H1 (cell line): ENCODE measurements at regions of chr12 and their contacts with region 1.

Region 1: DNA sequence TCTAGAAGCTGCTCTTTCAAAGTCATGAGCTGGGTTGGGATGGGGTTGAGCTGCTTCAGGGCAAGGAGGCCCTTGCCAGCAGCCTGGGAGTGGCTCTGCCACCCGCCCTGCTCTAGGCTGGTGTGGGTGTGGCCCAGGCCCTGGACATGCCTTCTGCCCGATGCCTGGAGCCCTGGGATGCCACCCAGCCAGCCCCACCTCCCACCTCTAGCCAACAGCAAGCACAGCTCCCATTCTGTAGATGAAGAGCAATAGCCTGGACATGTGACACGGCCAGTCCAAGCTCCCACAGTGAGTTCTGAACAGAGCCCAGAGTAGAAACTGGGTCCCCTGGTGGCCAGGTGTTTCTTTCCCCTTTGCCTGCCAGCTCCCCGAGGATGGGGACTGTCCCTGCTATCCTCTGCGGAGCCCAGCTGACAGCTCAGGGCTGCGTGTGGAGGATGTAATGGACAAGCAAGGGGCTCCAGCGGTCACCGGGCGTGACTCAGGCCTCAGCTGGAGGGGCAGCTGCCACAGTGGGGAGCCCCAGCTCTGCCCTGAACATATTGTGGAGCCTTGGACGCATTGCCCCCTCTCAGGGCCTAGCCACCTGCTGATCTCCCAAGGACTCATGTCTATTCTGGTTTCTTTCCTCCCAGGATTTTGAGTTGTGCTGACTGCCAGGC is 165.2 kb downstream of the TSPAN9 start:
- DNase-seq: no peak
- H3K4me3 ChIP-seq: no peak overlapping the region
- H3K27ac ChIP-seq: no peak overlapping the region
- H3K4me1 ChIP-seq: peaks cover 0 to under 1% (median 0%) of the 10 kb centered on the region in 4 experiments; a peak in 4 of 7 replicates
- H3K27me3 ChIP-seq: no peaks in the 10 kb centered on the region
- CTCF ChIP-seq: peak in 1 of 3 experiments; percentile 9; a peak in 1 of 4 replicates
- EP300 ChIP-seq: no peak
- POLR2A ChIP-seq: no peak
- RAD21 ChIP-seq: no peak; a peak in 1 of 4 replicates

Region 2: DNA sequence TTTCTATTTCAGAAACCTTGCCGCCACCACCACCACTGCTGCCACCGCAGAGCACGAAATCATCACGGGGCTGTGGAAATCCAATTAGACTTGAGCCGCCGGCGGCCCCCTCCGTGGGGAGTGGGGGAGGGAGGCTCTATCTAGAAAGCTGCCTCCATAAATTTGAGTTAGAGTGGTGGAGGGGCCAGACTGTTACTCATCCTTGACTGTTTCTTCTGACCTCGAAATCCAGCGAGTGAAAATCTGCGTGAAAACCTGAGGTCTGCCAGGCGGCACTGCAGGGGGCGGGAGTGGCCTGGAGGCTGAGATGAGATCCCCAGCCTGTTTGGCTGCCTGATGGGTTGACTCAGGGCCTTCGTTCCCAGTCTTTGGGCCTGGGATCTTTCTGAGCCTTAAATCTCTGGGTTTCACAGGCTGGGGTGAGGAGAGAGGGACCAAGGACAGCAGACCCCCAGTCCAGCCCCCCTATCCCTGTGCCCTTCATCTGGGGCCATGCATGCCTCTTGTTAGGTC is 135.2 kb before region 1 on chr12:
- CTCF ChIA-PET with region 1: no interaction called
- POLR2A ChIA-PET with region 1: no interaction called
- DNase-seq: peak in 1 of 2 experiments; percentile 63
- H3K4me3 ChIP-seq: no peak overlapping the region; a peak in 1 of 8 replicates
- H3K27ac ChIP-seq: no peak overlapping the region
- H3K4me1 ChIP-seq: peaks cover 0 to 9% (median 4%) of the 10 kb centered on the region in 4 experiments; a peak in 4 of 7 replicates
- H3K27me3 ChIP-seq: no peaks in the 10 kb centered on the region
- CTCF ChIP-seq: no peak
- EP300 ChIP-seq: no peak
- POLR2A ChIP-seq: no peak
- RAD21 ChIP-seq: no peak

Region 3: GRCh38 chr12:3225154-3225795 is 17.1 kb before region 1 on chr12:
- CTCF ChIA-PET with region 1: interaction called, 17 read pairs
- POLR2A ChIA-PET with region 1: interaction called, 3 read pairs
- DNase-seq: no peak
- H3K4me3 ChIP-seq: no peak overlapping the region
- H3K27ac ChIP-seq: no peak overlapping the region
- H3K4me1 ChIP-seq: peaks cover 0 to 18% (median 4%) of the 10 kb centered on the region in 4 experiments; a peak in 3 of 7 replicates
- H3K27me3 ChIP-seq: no peaks in the 10 kb centered on the region
- CTCF ChIP-seq: no peak
- EP300 ChIP-seq: no peak
- POLR2A ChIP-seq: no peak
- RAD21 ChIP-seq: no peak

Region 4: GRCh38 chr12:3252450-3252891 is 10.1 kb after region 1 on chr12:
- CTCF ChIA-PET with region 1: interaction called, 19 read pairs
- POLR2A ChIA-PET with region 1: interaction called, 4 read pairs
- DNase-seq: no peak
- H3K4me3 ChIP-seq: no peak overlapping the region
- H3K27ac ChIP-seq: no peak overlapping the region
- H3K4me1 ChIP-seq: 0 out of 7 replicates have a peak, but pooled peaks cover 0 to 2% (median 0%) of the 10 kb centered on the region in 4 experiments
- H3K27me3 ChIP-seq: no peaks in the 10 kb centered on the region
- CTCF ChIP-seq: no peak
- EP300 ChIP-seq: no peak
- POLR2A ChIP-seq: no peak
- RAD21 ChIP-seq: no peak